ENCODE measurements at regions of chr6 and their contacts with region 1.

Region 1: GRCh38 chr6:11093589-11094410 is at the start of gene SMIM13:
- H3K4me3 ChIP-seq: peak within 1 kb of the TSS; percentile 98
- H3K27ac ChIP-seq: peak within 1 kb of the TSS; percentile 92
- H3K4me1 ChIP-seq: peaks cover 4% of the 10 kb centered on the region; the same call in 1 of the 2 replicates
- CTCF ChIP-seq: peak; percentile 97

Region 2: DNA sequence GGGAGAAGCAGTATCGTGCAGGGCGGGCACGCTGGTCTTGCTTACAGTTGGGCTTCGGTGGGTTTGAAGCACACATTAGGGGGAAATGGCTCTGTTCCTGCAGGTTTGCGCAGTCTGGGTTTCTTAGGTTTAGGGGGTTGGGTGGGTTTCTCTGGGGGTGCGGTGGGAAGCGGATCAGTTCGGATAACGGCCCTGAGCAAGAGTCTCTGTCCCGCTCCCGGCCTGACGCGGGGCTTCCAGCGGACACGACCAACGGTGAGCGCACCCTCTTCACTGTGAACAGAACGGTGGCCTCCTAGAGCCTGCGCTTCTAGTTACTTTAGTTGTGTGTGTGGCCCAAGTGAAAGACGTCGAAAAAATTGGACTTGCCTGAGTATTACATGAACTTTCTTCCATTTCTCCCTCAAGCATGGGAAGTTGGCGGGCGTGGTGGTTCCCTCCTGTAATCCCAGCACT is 49.1 kb before region 1 on chr6:
- CTCF ChIA-PET with region 1: no interaction called
- POLR2A ChIA-PET with region 1: no interaction called
- H3K4me3 ChIP-seq: peak overlapping the region; percentile 75
- H3K27ac ChIP-seq: no peak overlapping the region; the same call in 1 of the 2 replicates
- H3K4me1 ChIP-seq: peaks cover 2% of the 10 kb centered on the region; the same call in 1 of the 2 replicates
- CTCF ChIP-seq: no peak; the same call in 1 of the 2 replicates

Region 3: DNA sequence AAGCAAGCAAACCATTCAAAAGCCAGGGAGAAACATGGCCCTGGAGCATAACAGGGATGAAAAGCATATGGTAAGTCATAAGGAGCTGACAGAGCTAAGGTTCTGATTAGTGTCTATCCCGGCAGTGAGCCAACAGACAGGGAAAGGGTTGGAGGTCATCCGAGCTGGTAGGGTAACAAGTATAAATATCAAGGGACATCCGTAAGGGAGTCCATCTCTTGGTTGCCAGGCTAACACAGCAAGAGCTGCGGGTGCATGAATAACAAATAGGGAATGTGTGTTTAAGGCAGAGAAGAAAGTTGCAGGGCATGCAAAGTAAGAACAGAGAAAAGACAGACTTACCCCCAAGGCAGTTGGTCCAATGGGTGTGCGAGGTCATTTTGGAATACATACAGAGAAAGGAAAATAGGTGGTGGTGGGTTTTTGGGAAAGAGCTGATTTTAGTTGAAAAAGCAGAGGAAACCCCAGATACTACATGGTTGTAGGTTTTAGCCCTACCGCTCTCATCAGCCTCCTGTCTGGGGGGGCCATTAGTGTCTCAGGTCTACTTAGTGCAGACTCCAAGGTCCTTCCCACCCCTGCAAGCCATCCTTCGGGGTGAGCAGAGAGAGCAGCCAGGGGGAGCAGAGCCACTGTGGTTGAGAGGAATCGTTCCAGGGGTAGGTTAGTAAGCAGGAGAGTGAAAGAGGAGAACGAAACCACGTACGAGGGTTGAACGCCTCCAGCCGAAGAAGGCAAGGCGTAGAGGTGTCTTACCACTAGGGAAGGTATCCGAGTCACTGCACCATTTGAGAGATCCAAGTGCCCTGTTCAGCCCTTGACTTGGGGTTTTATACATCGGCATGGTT is 17.3 kb after region 1 on chr6 and contains the start of gene ERVFRD-1:
- CTCF ChIA-PET with region 1: no interaction called
- POLR2A ChIA-PET with region 1: interaction called, 11 read pairs
- H3K4me3 ChIP-seq: no peak within 1 kb of the TSS
- H3K27ac ChIP-seq: no peak within 1 kb of the TSS
- H3K4me1 ChIP-seq: peaks cover 2% of the 10 kb centered on the region; the same call in 1 of the 2 replicates
- CTCF ChIP-seq: no peak